A549 (cell line): ENCODE measurements at regions of chr3 and their contacts with region 1.

Region 1: GRCh38 chr3:148955544-148956346 is 35.6 kb upstream of the GYG1 start:
- DNase-seq: peak; percentile 19 to 72
- ATAC-seq: peak; percentile 76 to 88
- H3K4me3 ChIP-seq: no peak overlapping the region
- H3K27ac ChIP-seq: peak overlapping the region; percentile 7 to 53; a peak in 4 of 6 replicates
- H3K4me1 ChIP-seq: peaks cover 5% of the 10 kb centered on the region; the same call in 2 of the 3 replicates
- CTCF ChIP-seq: peak; percentile 89
- EP300 ChIP-seq: no peak
- POLR2A ChIP-seq: no peak
- RAD21 ChIP-seq: peak; percentile 89 to 93

Region 2: GRCh38 chr3:148739720-148740119 is 216.0 kb before region 1 on chr3:
- CTCF ChIA-PET with region 1: no interaction called
- POLR2A ChIA-PET with region 1: no interaction called
- DNase-seq: no peak
- ATAC-seq: no peak
- H3K4me3 ChIP-seq: no peak overlapping the region
- H3K27ac ChIP-seq: no peak overlapping the region
- H3K4me1 ChIP-seq: peaks cover 21% of the 10 kb centered on the region
- CTCF ChIP-seq: no peak
- EP300 ChIP-seq: no peak
- POLR2A ChIP-seq: no peak
- RAD21 ChIP-seq: no peak

Region 3: DNA sequence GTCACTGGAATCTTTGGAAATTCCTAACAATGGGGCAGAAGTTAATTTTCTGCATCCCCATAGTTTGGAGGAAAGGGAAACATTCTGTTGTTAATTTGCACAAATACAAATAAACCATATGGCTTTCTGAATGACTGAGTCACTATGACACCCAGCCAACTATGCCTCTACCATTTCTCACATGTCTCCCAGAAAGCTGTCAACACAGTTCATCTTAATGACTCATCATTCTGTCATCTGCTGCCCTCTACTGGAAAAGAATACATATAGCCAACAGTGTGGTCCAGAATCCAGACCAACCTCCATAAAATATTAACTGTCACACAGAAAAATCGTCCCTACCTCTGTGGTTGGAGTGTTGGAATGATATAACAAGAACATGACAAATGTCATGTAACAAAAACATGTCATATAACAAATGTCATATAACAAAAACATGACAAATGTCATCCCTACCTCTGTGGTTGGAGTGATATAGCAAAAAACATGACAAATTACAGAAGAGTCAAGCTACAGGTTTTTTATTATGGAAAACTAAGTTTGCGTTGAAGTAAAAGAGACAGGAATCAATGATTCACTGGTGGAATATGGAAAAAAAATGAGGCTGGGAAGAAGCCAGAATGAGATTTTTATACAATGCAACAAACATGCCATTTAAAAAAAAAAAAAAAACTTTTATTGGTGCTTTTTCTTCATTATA is 12.1 kb before region 1 on chr3:
- CTCF ChIA-PET with region 1: interaction called, 12 read pairs
- POLR2A ChIA-PET with region 1: no interaction called
- DNase-seq: peak; percentile 83 to 88
- ATAC-seq: peak; percentile 90 to 97
- H3K4me3 ChIP-seq: no peak overlapping the region
- H3K27ac ChIP-seq: no peak overlapping the region
- H3K4me1 ChIP-seq: peaks cover 8% of the 10 kb centered on the region; the same call in 2 of the 3 replicates
- CTCF ChIP-seq: peak; percentile 87
- EP300 ChIP-seq: no peak
- POLR2A ChIP-seq: no peak
- RAD21 ChIP-seq: peak; percentile 84 to 85

Region 4: DNA sequence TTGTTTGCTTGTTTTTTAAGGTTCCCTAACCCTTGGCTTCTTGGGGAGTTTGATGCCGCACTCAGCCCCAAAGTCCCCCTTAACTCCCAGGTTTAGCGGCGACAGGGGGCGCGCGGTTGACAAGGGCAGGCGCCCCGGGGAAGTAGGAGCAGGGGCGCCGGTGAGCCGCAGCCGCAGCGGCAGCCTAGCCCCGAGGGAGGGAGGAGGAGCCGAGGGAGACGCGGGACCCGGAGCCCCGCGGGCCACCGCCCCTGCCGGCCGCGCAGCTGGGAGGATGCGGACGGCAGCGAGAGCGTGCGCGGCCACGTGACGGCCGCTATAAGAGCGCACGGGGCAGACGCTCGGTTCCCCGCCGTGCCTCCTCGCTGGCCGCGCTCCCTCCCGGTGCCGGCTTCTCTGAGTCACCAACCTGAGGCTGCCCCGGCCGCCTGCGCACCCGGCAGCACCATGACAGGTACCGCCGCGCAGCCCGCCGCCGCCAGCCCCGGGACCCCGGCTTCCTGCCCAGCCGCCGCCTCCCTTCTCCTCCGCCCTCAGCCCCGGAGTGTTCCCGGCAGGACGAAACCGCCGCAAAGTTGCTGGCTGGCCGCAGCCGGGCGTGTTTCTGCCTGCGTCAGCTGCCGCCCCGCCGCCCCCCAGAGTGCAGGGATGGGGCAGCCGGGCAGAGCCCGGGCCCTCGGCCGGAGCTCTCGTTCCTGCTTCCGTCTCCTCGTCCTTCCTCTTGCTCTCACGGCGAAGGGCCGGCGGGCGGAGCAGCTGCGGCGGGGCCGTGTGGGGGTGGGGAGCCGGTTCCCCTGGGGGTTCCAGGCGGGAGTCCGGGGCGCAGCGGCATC is 35.7 kb after region 1 on chr3 and contains the start of gene GYG1:
- CTCF ChIA-PET with region 1: interaction called, 15 read pairs
- POLR2A ChIA-PET with region 1: no interaction called
- DNase-seq: peak; percentile 81 to 82
- ATAC-seq: peak; percentile 93 to 95
- H3K4me3 ChIP-seq: peak within 1 kb of the TSS; percentile 86
- H3K27ac ChIP-seq: peak within 1 kb of the TSS; percentile 80 to 98
- H3K4me1 ChIP-seq: peaks cover 7% of the 10 kb centered on the region
- CTCF ChIP-seq: peak; percentile 52
- EP300 ChIP-seq: no peak
- POLR2A ChIP-seq: peak; percentile 93
- RAD21 ChIP-seq: peak; percentile 19 to 33; a peak in 4 of 5 replicates
- polyA plus RNA-seq, gene GYG1: 39.6 and 42.4 TPM in 2 replicates

Region 5: GRCh38 chr3:149273096-149273751 is 317.5 kb after region 1 on chr3:
- CTCF ChIA-PET with region 1: interaction called, 13 read pairs
- POLR2A ChIA-PET with region 1: interaction called, 3 read pairs
- DNase-seq: peak; percentile 62 to 92
- ATAC-seq: peak; percentile 79 to 90
- H3K4me3 ChIP-seq: no peak overlapping the region
- H3K27ac ChIP-seq: peak overlapping the region; percentile 56 to 77
- H3K4me1 ChIP-seq: peaks cover 25% of the 10 kb centered on the region
- CTCF ChIP-seq: peak; percentile 100
- EP300 ChIP-seq: no peak
- POLR2A ChIP-seq: no peak
- RAD21 ChIP-seq: peak; percentile 100

Region 6: GRCh38 chr3:149339931-149340309 is 384.2 kb after region 1 on chr3:
- CTCF ChIA-PET with region 1: interaction called, 13 read pairs
- POLR2A ChIA-PET with region 1: no interaction called
- DNase-seq: peak; percentile 82 to 98
- ATAC-seq: peak; percentile 99 to 100
- H3K4me3 ChIP-seq: 0 out of 3 replicates have a peak overlapping the region, but pooled peaks have one; percentile 2
- H3K27ac ChIP-seq: peak overlapping the region; percentile 88 to 93
- H3K4me1 ChIP-seq: peaks cover 52% of the 10 kb centered on the region
- CTCF ChIP-seq: no peak
- EP300 ChIP-seq: peak; percentile 92 to 95
- POLR2A ChIP-seq: no peak
- RAD21 ChIP-seq: peak; percentile 20 to 44; a peak in 3 of 5 replicates